Esophagus squamous epithelium (tissue), 5 donors: ENCODE measurements at regions of chr1 and their contacts with region 1.

Region 1: DNA sequence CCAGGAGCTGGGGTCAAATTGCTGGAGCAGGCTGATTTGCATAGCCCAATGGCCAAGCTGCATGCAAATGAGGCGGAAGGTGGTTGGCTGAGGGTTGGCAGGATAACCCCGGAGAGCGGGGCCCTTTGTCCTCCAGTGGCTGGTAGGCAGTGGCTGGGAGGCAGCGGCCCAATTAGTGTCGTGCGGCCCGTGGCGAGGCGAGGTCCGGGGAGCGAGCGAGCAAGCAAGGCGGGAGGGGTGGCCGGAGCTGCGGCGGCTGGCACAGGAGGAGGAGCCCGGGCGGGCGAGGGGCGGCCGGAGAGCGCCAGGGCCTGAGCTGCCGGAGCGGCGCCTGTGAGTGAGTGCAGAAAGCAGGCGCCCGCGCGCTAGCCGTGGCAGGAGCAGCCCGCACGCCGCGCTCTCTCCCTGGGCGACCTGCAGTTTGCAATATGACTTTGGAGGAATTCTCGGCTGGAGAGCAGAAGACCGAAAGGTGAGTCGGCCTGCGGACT is at the start of gene GADD45A:
- DNase-seq: peak; percentile 97
- H3K4me3 ChIP-seq: peak within 1 kb of the TSS; percentile 77 to 99 (median 88)
- H3K27ac ChIP-seq: peak within 1 kb of the TSS; percentile 96 to 100 (median 98)
- H3K4me1 ChIP-seq: peaks cover 19 to 49% (median 22%) of the 10 kb centered on the region in 3 donors
- H3K27me3 ChIP-seq: no peaks in the 10 kb centered on the region
- CTCF ChIP-seq: peak in 2 of 6 experiments; percentile 8 to 24
- POLR2A ChIP-seq: peak in 3 of 4 donors; percentile 99 to 100 (median 100)
- total RNA-seq, gene GADD45A: 35.2 to 62.6 (median 46.5) TPM

Region 2: GRCh38 chr1:67561704-67562113 is 123.4 kb before region 1 on chr1:
- intact Hi-C with region 1: loop called (anchors 10 kb)
- DNase-seq: no peak
- H3K4me3 ChIP-seq: no peak overlapping the region
- H3K27ac ChIP-seq: peak overlapping the region in 3 of 4 donors; percentile 12 to 59 (median 21)
- H3K4me1 ChIP-seq: peaks cover 0 to 61% (median 31%) of the 10 kb centered on the region in 3 donors
- H3K27me3 ChIP-seq: no peaks in the 10 kb centered on the region
- CTCF ChIP-seq: peak; percentile 51 to 93 (median 86)
- POLR2A ChIP-seq: no peak

Region 3: DNA sequence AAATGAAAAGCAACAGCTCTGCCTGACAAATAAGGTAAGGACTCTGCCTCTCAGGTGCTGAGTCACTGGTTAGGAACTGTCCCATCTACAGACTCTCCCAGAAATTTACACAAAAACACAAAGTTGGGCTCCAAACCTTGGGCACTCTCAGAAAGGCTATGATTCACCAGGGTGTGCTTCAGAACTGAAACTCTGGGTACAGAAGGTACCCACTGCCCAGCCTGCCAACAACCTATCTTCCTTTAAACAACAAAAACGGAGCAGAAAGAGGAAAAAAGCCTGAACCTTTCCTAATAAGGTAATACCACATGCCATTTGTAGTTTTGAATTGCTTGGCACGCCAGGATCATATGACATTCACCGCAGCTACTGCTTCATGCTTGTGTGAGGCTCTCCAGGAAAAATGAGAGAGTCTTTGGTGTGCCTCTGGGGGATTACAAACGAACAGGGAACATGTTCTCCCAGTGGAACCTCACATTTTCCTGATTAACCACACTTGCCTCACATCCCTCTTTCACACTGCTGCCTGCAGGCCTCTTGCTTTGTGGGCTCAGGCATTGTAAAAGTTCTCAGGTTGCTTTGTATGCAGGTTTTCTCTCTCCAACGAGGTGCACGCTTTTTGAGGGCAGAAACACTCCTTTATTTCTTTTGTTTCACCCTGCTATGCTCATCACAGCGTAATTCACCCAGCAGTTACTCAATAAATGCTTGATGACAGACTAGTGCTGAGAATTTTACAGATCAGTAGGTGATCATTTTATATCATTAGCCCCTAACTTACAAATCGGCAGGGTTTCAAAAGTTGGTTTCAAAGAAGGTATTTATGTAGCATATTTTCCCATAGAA is 65.0 kb after region 1 on chr1:
- intact Hi-C with region 1: loop called (anchors 2 kb)
- DNase-seq: no peak
- H3K4me3 ChIP-seq: peak overlapping the region in 3 of 4 donors; percentile 16 to 45 (median 29)
- H3K27ac ChIP-seq: peak overlapping the region; percentile 79 to 93 (median 90)
- H3K4me1 ChIP-seq: peaks cover 25 to 97% (median 51%) of the 10 kb centered on the region in 3 donors
- H3K27me3 ChIP-seq: no peaks in the 10 kb centered on the region
- CTCF ChIP-seq: peak in 2 of 6 experiments; percentile 6 to 14
- POLR2A ChIP-seq: peak in 1 of 4 donors; percentile 14

Region 4: GRCh38 chr1:67832737-67833601 is 147.9 kb after region 1 on chr1 and contains the start of gene GNG12:
- intact Hi-C with region 1: loop called (anchors 10 kb)
- DNase-seq: no peak
- H3K4me3 ChIP-seq: peak within 1 kb of the TSS; percentile 77 to 97 (median 82)
- H3K27ac ChIP-seq: peak within 1 kb of the TSS; percentile 92 to 97 (median 96)
- H3K4me1 ChIP-seq: peaks cover 4 to 80% (median 35%) of the 10 kb centered on the region in 3 donors
- H3K27me3 ChIP-seq: peaks cover 0 to 15% (median 0%) of the 10 kb centered on the region in 4 donors
- CTCF ChIP-seq: peak in 1 of 6 experiments; percentile 6
- POLR2A ChIP-seq: peak in 2 of 4 donors; percentile 68 to 73
- total RNA-seq, gene GNG12: 65.4 to 104 (median 89.9) TPM